WTC11 (cell line): ENCODE measurements at regions of chr22 and their contacts with region 1.

Region 1: GRCh38 chr22:38705235-38706100 is at the start of gene GTPBP1:
- DNase-seq: peak; percentile 97
- ATAC-seq: peak; percentile 91
- H3K4me3 Mint-ChIP-seq: peak within 1 kb of the TSS; percentile 91
- H3K27ac Mint-ChIP-seq: peak within 1 kb of the TSS; percentile 100
- H3K4me1 Mint-ChIP-seq: peaks cover 57% of the 10 kb centered on the region
- H3K27me3 Mint-ChIP-seq: no peaks in the 10 kb centered on the region; the same call in 1 of the 2 replicates
- CTCF ChIP-seq: no peak
- total RNA-seq, gene GTPBP1: 98.9 to 108 TPM (median 101 TPM) in 3 replicates

Region 2: GRCh38 chr22:38694945-38695344 is 10.5 kb before region 1 on chr22:
- CTCF ChIA-PET with region 1: no interaction called
- POLR2A ChIA-PET with region 1: no interaction called
- DNase-seq: no peak
- ATAC-seq: no peak
- H3K4me3 Mint-ChIP-seq: no peak overlapping the region
- H3K27ac Mint-ChIP-seq: no peak overlapping the region
- H3K4me1 Mint-ChIP-seq: peaks cover 29% of the 10 kb centered on the region
- H3K27me3 Mint-ChIP-seq: no peaks in the 10 kb centered on the region
- CTCF ChIP-seq: no peak

Region 3: DNA sequence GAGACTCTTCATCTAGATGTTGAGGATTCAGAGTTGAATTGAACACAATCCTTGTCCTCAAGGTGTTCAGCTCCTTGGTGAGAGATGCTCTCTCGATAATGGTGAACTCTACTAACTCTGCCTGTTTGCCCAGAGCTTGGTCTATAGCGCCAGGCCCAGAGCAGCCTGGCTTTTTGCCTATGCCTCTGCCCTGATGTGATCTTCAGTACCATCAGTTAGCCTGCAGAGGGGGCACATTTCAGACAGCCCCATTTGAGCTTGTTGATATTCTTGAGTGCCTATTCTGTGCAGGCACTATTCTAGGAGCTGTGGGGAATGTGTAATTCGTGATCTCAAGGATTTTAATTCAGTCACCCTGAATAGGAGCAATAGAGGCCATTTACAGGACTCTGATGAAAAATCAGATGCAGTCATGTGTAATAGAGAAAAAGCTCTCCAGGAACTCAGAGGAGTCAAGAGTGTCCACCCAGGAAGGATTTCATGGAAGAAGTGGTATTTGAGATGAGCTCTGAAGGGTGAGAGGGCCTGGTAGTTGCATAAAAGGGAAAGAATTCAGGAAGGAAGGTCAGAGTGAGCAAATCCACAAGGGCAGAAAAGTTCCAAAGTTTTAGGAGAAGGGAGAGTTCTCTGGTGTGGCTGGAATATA is 19.6 kb after region 1 on chr22:
- CTCF ChIA-PET with region 1: interaction called, 11 read pairs
- POLR2A ChIA-PET with region 1: no interaction called
- DNase-seq: no peak
- ATAC-seq: peak; percentile 96
- H3K4me3 Mint-ChIP-seq: no peak overlapping the region
- H3K27ac Mint-ChIP-seq: no peak overlapping the region; the same call in 1 of the 2 replicates
- H3K4me1 Mint-ChIP-seq: no peaks in the 10 kb centered on the region
- H3K27me3 Mint-ChIP-seq: no peaks in the 10 kb centered on the region
- CTCF ChIP-seq: peak; percentile 25; the same call in 1 of the 2 replicates

Region 4: DNA sequence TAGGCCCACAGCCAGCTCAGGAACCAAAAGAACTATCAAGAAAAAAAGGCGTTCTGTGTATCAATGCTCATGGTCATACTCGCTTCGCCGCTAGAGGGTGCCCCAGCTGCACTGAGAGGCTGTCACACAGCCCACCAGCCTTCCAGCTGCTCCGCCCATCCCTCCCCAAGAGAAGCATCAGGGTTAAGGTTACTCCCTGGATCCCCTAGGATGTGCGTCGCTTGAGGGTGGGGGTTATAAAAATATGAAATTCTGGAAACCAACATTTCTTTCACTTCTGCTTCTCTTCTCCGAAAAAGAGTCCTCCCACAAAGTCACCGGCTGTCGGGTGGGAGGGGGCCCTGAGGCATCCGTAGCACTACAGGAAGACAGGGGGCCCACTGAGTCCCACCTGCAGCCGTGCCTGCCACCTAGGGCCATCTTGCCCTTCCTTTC is 164.9 kb after region 1 on chr22:
- CTCF ChIA-PET with region 1: no interaction called
- POLR2A ChIA-PET with region 1: no interaction called
- DNase-seq: peak; percentile 95
- ATAC-seq: peak; percentile 55
- H3K4me3 Mint-ChIP-seq: peak overlapping the region; percentile 86
- H3K27ac Mint-ChIP-seq: no peak overlapping the region
- H3K4me1 Mint-ChIP-seq: peaks cover 39% of the 10 kb centered on the region
- H3K27me3 Mint-ChIP-seq: peaks cover 7% of the 10 kb centered on the region
- CTCF ChIP-seq: peak; percentile 72

Region 5: GRCh38 chr22:38886333-38886732 is 180.9 kb after region 1 on chr22:
- CTCF ChIA-PET with region 1: no interaction called
- POLR2A ChIA-PET with region 1: no interaction called
- DNase-seq: no peak
- ATAC-seq: no peak
- H3K4me3 Mint-ChIP-seq: no peak overlapping the region
- H3K27ac Mint-ChIP-seq: no peak overlapping the region
- H3K4me1 Mint-ChIP-seq: no peaks in the 10 kb centered on the region; the same call in 1 of the 2 replicates
- H3K27me3 Mint-ChIP-seq: 0 out of 2 replicates have a peak, but pooled peaks cover 3% of the 10 kb centered on the region
- CTCF ChIP-seq: no peak